ENCODE measurements at regions of chr3 and their contacts with region 1.

Region 1: DNA sequence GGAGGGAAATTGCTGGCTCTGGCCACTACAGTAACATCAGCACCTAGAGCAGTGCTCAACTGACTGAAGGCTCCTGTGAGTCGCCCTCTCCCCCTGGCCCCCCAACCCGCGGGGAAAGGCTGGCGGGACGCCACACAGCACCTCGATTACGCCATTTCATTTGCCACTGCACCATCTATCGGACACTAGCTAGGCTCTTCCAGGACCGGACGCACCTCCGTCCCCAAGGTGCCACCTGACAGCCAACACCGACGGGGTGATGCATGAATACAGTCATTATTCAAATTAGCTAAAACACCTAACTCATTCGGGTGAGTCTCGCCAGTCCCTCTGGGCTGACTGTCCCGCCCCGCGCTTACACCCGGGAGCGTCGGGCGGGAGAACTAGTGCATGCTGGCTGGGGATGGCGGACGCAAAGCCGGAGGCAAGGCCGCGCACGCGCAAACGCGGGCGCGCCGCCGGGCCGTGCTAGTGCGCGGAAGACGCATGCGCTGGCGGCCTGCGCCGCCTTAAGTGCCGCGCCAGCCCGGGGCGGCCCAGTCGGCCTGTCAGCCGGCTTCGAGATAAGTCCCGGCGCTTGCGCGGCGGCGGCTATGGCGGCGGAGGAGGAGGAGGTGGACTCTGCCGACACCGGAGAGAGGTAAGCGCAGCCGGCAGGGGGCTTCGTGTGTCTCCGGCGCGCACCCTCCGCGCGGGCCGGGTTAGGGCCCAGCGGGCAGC is at the start of gene ABHD5:
- DNase-seq: peak; percentile 92
- ATAC-seq: peak; percentile 82
- H3K4me3 Mint-ChIP-seq: peak within 1 kb of the TSS; percentile 88
- H3K27ac Mint-ChIP-seq: peak within 1 kb of the TSS; percentile 86
- H3K4me1 Mint-ChIP-seq: peaks cover 28% of the 10 kb centered on the region
- H3K27me3 Mint-ChIP-seq: no peaks in the 10 kb centered on the region
- CTCF ChIP-seq: no peak
- total RNA-seq, gene ABHD5: 6.0 and 8.0 TPM in 2 replicates

Region 2: DNA sequence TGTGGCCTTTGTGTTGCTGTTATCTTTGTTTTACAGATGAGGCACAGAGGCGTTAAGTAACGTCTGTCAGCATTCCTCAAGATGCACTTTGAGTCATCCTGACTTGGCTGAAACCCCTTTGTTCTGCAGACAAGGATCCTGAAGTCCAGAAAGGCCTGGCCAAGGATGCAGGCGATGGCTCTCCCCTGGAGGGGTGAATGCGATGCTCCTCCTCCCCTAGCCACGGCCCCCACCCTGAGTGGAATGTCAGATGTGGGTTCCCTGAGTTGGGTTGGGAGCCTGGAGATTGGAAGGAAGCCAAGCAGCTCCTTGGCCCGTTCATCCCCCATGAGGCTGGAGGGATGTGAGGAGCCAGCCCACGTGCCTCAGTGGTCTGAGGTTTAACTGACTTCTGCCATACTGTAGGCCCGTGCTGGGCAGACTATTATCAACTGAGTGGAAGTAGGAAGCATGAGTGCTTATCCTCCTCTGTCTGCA is 628.0 kb before region 1 on chr3:
- CTCF ChIA-PET with region 1: no interaction called
- POLR2A ChIA-PET with region 1: no interaction called
- intact Hi-C with region 1: no loop called
- DNase-seq: no peak
- ATAC-seq: no peak
- H3K4me3 Mint-ChIP-seq: no peak overlapping the region
- H3K27ac Mint-ChIP-seq: no peak overlapping the region
- H3K4me1 Mint-ChIP-seq: no peaks in the 10 kb centered on the region
- H3K27me3 Mint-ChIP-seq: no peaks in the 10 kb centered on the region
- CTCF ChIP-seq: no peak

Region 3: GRCh38 chr3:43286115-43286840 is 404.3 kb before region 1 on chr3 and contains the start of gene SNRK:
- CTCF ChIA-PET with region 1: no interaction called
- POLR2A ChIA-PET with region 1: no interaction called
- intact Hi-C with region 1: loop called (anchors 1 kb)
- DNase-seq: peak; percentile 98
- ATAC-seq: peak; percentile 88
- H3K4me3 Mint-ChIP-seq: peak within 1 kb of the TSS; percentile 97
- H3K27ac Mint-ChIP-seq: peak within 1 kb of the TSS; percentile 95
- H3K4me1 Mint-ChIP-seq: peaks cover 49% of the 10 kb centered on the region
- H3K27me3 Mint-ChIP-seq: no peaks in the 10 kb centered on the region
- CTCF ChIP-seq: no peak
- total RNA-seq, gene SNRK: 31.1 TPM in 2 replicates

Region 4: GRCh38 chr3:43894176-43895049 is 203.9 kb after region 1 on chr3:
- CTCF ChIA-PET with region 1: no interaction called
- POLR2A ChIA-PET with region 1: no interaction called
- intact Hi-C with region 1: loop called (anchors 2 kb)
- DNase-seq: peak; percentile 43
- ATAC-seq: peak; percentile 63
- H3K4me3 Mint-ChIP-seq: peak overlapping the region; percentile 83
- H3K27ac Mint-ChIP-seq: peak overlapping the region; percentile 56
- H3K4me1 Mint-ChIP-seq: peaks cover 33% of the 10 kb centered on the region
- H3K27me3 Mint-ChIP-seq: peaks cover 17% of the 10 kb centered on the region
- CTCF ChIP-seq: no peak

Region 5: GRCh38 chr3:44198284-44199269 is 508.0 kb after region 1 on chr3:
- CTCF ChIA-PET with region 1: no interaction called
- POLR2A ChIA-PET with region 1: no interaction called
- intact Hi-C with region 1: loop called (anchors 5 kb)
- DNase-seq: peak; percentile 29
- ATAC-seq: peak; percentile 71
- H3K4me3 Mint-ChIP-seq: no peak overlapping the region
- H3K27ac Mint-ChIP-seq: no peak overlapping the region
- H3K4me1 Mint-ChIP-seq: no peaks in the 10 kb centered on the region
- H3K27me3 Mint-ChIP-seq: peaks cover 10% of the 10 kb centered on the region
- CTCF ChIP-seq: peak; percentile 67

Region 6: GRCh38 chr3:44685128-44685800 is 994.7 kb after region 1 on chr3:
- CTCF ChIA-PET with region 1: no interaction called
- POLR2A ChIA-PET with region 1: no interaction called
- intact Hi-C with region 1: loop called (anchors 2 kb)
- DNase-seq: peak; percentile 56
- ATAC-seq: peak; percentile 92
- H3K4me3 Mint-ChIP-seq: peak overlapping the region; percentile 96
- H3K27ac Mint-ChIP-seq: peak overlapping the region; percentile 76
- H3K4me1 Mint-ChIP-seq: peaks cover 19% of the 10 kb centered on the region
- H3K27me3 Mint-ChIP-seq: peaks cover 23% of the 10 kb centered on the region
- CTCF ChIP-seq: no peak